ENCODE measurements at regions of chrX and their contacts with region 1.

Region 1: GRCh38 chrX:108304210-108304609 is 134.0 kb downstream of the COL4A6 start:
- DNase-seq: peak; percentile 38 to 74 (median 65)
- H3K4me3 ChIP-seq: no peak overlapping the region
- H3K27ac ChIP-seq: no peak overlapping the region
- H3K4me1 ChIP-seq: peaks cover 0 to 11% (median 6%) of the 10 kb centered on the region in 4 experiments
- H3K27me3 ChIP-seq: peaks cover 0 to 25% (median 0%) of the 10 kb centered on the region in 5 experiments

Region 2: DNA sequence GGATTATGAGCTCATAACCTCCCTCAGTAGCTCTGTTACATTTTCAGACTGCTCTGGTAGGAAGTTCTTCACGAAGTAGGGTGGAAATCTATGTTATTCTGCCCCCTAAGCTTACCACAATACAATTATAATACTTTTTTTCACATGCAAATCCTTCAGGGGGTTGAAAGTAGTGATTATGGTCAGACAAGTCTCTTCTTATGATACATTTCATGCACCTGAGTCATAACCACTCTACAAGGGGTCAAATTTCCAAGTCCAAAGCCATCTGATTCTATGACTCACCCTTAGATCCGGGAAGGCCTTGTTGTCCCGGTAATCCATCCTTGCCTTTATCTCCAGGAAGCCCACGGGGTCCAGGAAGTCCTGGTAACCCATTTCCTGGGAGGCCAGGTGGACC is 117.4 kb before region 1 on chrX:
- CTCF ChIA-PET with region 1: no interaction called
- POLR2A ChIA-PET with region 1: no interaction called
- DNase-seq: no peak
- H3K4me3 ChIP-seq: no peak overlapping the region
- H3K27ac ChIP-seq: no peak overlapping the region
- H3K4me1 ChIP-seq: no peaks in the 10 kb centered on the region
- H3K27me3 ChIP-seq: no peaks in the 10 kb centered on the region

Region 3: GRCh38 chrX:108224727-108225621 is 79.2 kb before region 1 on chrX:
- CTCF ChIA-PET with region 1: interaction called, 31 read pairs
- POLR2A ChIA-PET with region 1: no interaction called
- DNase-seq: peak; percentile 22 to 64 (median 60)
- H3K4me3 ChIP-seq: no peak overlapping the region
- H3K27ac ChIP-seq: no peak overlapping the region
- H3K4me1 ChIP-seq: no peaks in the 10 kb centered on the region
- H3K27me3 ChIP-seq: peaks cover 0 to 34% (median 12%) of the 10 kb centered on the region in 5 experiments